Mammary epithelial cell (primary cell): ENCODE measurements at regions of chr19 and their contacts with region 1.

Region 1: DNA sequence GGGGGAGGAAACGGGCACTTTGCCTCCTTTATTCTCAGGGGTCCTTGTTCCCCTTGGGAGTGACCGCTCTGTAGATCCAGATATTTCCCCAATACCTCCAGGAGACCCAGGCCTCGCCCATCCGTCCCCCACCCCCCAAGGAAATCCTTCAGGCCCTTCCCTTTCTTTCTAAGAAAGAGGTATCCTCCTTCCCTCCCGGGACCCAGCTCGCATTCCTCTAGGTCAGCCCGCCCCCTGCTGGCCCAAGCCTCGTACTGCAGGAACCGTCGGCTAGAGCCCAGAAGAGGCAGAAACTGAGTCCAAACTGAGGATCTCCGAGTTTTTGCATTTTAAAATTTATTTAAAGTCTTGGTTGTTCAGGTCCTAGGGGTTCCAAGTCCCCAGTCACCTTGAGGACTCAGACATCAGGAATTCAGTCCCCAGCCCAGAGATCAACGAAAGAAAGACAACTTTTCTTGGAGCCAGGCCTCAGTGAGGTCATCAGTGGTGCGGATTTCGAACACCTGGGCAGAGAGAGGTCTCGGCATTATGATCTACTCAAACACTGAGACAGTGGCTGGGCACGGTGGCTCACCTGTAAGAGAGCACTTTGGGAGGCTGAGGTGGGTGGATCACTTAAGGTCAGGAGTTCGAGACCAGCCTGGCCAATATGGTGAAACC is 7.5 kb upstream of the LRFN1 start:
- DNase-seq: peak; percentile 47
- H3K4me3 ChIP-seq: no peak overlapping the region
- H3K27ac ChIP-seq: no peak overlapping the region
- H3K4me1 ChIP-seq: no peaks in the 10 kb centered on the region
- H3K27me3 ChIP-seq: no peaks in the 10 kb centered on the region
- CTCF ChIP-seq: peak; percentile 94 to 96

Region 2: DNA sequence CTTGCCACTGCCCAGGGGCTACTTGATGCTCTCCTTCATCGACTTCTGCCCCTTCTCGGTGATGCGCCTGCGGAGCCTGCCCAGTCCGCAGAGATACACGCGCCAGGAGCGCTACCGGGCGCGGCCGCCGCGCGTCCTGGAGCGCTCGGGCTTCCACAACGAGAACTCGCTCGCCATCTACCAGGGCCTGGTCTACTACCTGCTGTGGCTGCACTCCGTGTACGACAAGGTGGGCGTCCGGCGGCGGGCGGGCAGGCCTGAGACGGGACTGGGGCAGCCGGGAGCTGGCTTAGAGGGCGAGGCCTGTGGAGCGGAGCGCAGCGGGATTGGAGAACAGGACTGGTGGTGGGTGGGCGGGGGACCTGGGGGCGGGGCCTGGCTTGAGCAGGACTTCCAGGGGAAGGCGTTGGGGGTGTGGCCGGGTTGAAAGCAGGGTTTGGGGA is 966.5 kb before region 1 on chr19:
- CTCF ChIA-PET with region 1: interaction called, 10 read pairs
- dilution Hi-C with region 1: no loop called
- in situ Hi-C with region 1: no loop called
- intact Hi-C with region 1: no loop called
- DNase-seq: peak; percentile 81
- H3K4me3 ChIP-seq: peak overlapping the region; percentile 53 to 76 (median 59)
- H3K27ac ChIP-seq: no peak overlapping the region
- H3K4me1 ChIP-seq: peaks cover 8% of the 10 kb centered on the region
- H3K27me3 ChIP-seq: peaks cover 12% of the 10 kb centered on the region
- CTCF ChIP-seq: no peak

Region 3: GRCh38 chr19:38891771-38892170 is 436.4 kb before region 1 on chr19:
- CTCF ChIA-PET with region 1: interaction called, 10 read pairs
- dilution Hi-C with region 1: no loop called
- in situ Hi-C with region 1: no loop called
- intact Hi-C with region 1: no loop called
- DNase-seq: no peak
- H3K4me3 ChIP-seq: no peak overlapping the region
- H3K27ac ChIP-seq: no peak overlapping the region
- H3K4me1 ChIP-seq: no peaks in the 10 kb centered on the region
- H3K27me3 ChIP-seq: no peaks in the 10 kb centered on the region
- CTCF ChIP-seq: no peak

Region 4: DNA sequence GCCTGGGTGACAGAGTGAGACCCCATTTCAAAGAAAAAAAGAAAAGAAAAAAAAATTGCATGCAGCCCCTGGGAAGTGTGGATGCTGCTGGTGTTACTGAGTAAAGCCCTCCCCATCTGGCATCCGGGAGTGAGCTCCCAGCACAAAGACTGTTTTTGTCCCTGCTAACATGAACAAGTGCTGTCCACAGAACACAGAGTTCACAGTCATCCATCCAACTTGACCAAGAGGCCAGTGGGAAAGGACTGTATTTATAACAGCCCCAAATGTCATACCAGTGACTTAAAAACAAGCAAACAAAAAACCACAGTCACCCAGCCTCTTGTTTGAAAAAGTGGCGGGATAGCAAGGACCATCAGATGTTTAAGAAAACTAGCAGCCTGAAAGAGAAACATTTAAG is 363.4 kb before region 1 on chr19:
- CTCF ChIA-PET with region 1: no interaction called
- dilution Hi-C with region 1: no loop called
- in situ Hi-C with region 1: loop called (anchors 10 to 25 kb)
- intact Hi-C with region 1: loop called (anchors 1 kb)
- DNase-seq: no peak
- H3K4me3 ChIP-seq: no peak overlapping the region
- H3K27ac ChIP-seq: no peak overlapping the region
- H3K4me1 ChIP-seq: peaks cover 4% of the 10 kb centered on the region
- H3K27me3 ChIP-seq: no peaks in the 10 kb centered on the region
- CTCF ChIP-seq: no peak

Region 5: GRCh38 chr19:39125554-39126311 is 202.4 kb before region 1 on chr19 and contains the start of gene PAK4:
- CTCF ChIA-PET with region 1: no interaction called
- dilution Hi-C with region 1: no loop called
- in situ Hi-C with region 1: loop called (anchors 5 kb)
- intact Hi-C with region 1: loop called (anchors 1 kb)
- DNase-seq: peak; percentile 97
- H3K4me3 ChIP-seq: peak within 1 kb of the TSS; percentile 64 to 86 (median 80)
- H3K27ac ChIP-seq: peak within 1 kb of the TSS; percentile 65
- H3K4me1 ChIP-seq: peaks cover 13% of the 10 kb centered on the region
- H3K27me3 ChIP-seq: no peaks in the 10 kb centered on the region
- CTCF ChIP-seq: no peak
- total RNA-seq, gene PAK4: 8.8 to 45.1 TPM

Region 6: GRCh38 chr19:39187559-39187957 is 140.6 kb before region 1 on chr19:
- CTCF ChIA-PET with region 1: no interaction called
- dilution Hi-C with region 1: no loop called
- in situ Hi-C with region 1: no loop called
- intact Hi-C with region 1: loop called (anchors 1 kb)
- DNase-seq: no peak
- H3K4me3 ChIP-seq: no peak overlapping the region
- H3K27ac ChIP-seq: no peak overlapping the region
- H3K4me1 ChIP-seq: no peaks in the 10 kb centered on the region
- H3K27me3 ChIP-seq: no peaks in the 10 kb centered on the region
- CTCF ChIP-seq: no peak

Region 7: GRCh38 chr19:39212375-39212742 is 115.8 kb before region 1 on chr19:
- CTCF ChIA-PET with region 1: no interaction called
- dilution Hi-C with region 1: no loop called
- in situ Hi-C with region 1: no loop called
- intact Hi-C with region 1: loop called (anchors 1 kb)
- DNase-seq: no peak
- H3K4me3 ChIP-seq: no peak overlapping the region
- H3K27ac ChIP-seq: no peak overlapping the region
- H3K4me1 ChIP-seq: no peaks in the 10 kb centered on the region
- H3K27me3 ChIP-seq: no peaks in the 10 kb centered on the region
- CTCF ChIP-seq: peak in 1 of 2 donors; percentile 32

Region 8: GRCh38 chr19:39544226-39544903 is 216.2 kb after region 1 on chr19:
- CTCF ChIA-PET with region 1: no interaction called
- dilution Hi-C with region 1: no loop called
- in situ Hi-C with region 1: no loop called
- intact Hi-C with region 1: no loop called
- DNase-seq: peak; percentile 43
- H3K4me3 ChIP-seq: no peak overlapping the region
- H3K27ac ChIP-seq: peak overlapping the region; percentile 26
- H3K4me1 ChIP-seq: peaks cover 28% of the 10 kb centered on the region
- H3K27me3 ChIP-seq: no peaks in the 10 kb centered on the region
- CTCF ChIP-seq: no peak